Transverse colon (tissue), 4 donors: ENCODE measurements at regions of chr2 and their contacts with region 1.

Region 1: GRCh38 chr2:219279517-219280516 is 651 bp downstream of the DNAJB2 start:
- DNase-seq: peak; percentile 68
- H3K4me3 ChIP-seq: peak overlapping the region; percentile 53 to 91 (median 68)
- H3K27ac ChIP-seq: peak overlapping the region; percentile 94 to 98 (median 98)
- H3K4me1 ChIP-seq: peaks cover 16 to 27% (median 21%) of the 10 kb centered on the region in 4 donors
- H3K27me3 ChIP-seq: no peaks in the 10 kb centered on the region
- CTCF ChIP-seq: peak in 3 of 5 experiments; percentile 8 to 34 (median 20)
- EP300 ChIP-seq: no peak
- POLR2A ChIP-seq: peak; percentile 3

Region 2: DNA sequence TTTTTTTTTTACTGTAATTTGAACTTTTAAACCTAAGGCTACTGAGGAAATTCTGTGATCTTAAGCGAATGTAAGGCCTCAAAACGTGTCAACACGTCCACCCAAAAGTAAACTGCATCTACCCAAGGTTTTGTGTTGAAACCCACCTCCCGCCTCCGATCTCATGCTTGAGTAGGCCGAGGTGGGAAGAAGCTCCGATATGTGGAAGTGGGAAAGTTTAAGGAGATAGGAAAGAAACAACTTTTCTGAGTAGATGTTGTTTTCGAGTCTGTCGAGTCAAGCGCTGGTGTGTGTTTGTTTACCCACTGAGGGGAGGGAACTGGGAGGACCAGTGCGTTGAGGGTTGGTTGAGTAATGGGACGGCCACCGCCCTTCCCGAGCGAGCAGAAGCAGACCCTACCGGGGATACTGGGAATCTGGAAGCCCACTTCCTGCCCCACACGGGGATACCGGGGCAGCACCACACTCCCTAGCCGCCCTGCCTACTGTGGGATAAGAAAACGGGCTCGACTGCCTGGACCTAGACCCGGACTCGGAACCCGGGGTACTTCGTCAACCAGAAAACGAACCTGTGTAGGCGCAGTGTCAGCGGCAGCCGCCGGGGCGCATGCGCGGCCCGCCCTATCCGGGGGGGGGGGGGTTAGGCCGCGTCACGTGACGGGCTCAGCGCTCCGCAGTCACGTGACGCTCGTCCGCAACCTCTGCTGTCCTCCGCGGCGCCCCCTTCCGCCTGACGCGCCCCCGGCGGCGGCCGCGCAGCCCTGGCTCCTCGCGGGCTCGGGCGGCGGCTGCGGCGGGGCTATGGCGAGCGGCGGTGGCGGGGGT is 102.1 kb before region 1 on chr2 and contains the start of gene RETREG2:
- in situ Hi-C with region 1: loop called in 1 of 4 experiments (anchors 25 kb)
- intact Hi-C with region 1: loop called (anchors 2 kb)
- DNase-seq: peak; percentile 89
- H3K4me3 ChIP-seq: peak within 1 kb of the TSS; percentile 57 to 100 (median 92)
- H3K27ac ChIP-seq: peak within 1 kb of the TSS; percentile 93 to 100 (median 96)
- H3K4me1 ChIP-seq: peaks cover 14 to 56% (median 36%) of the 10 kb centered on the region in 4 donors
- H3K27me3 ChIP-seq: no peaks in the 10 kb centered on the region
- CTCF ChIP-seq: peak in 4 of 5 experiments; percentile 30 to 43 (median 34)
- EP300 ChIP-seq: peak; percentile 4
- POLR2A ChIP-seq: peak; percentile 99
- total RNA-seq, gene RETREG2: 37.8 to 226 (median 102) TPM

Region 3: GRCh38 chr2:219681694-219682300 is 402.0 kb after region 1 on chr2:
- in situ Hi-C with region 1: no loop called
- intact Hi-C with region 1: no loop called
- DNase-seq: no peak
- H3K4me3 ChIP-seq: no peak overlapping the region
- H3K27ac ChIP-seq: no peak overlapping the region
- H3K4me1 ChIP-seq: peaks cover 0 to 9% (median 2%) of the 10 kb centered on the region in 4 donors
- H3K27me3 ChIP-seq: peaks cover 13% of the 10 kb centered on the region
- CTCF ChIP-seq: no peak
- EP300 ChIP-seq: no peak
- POLR2A ChIP-seq: no peak